HEK293T (cell line): ENCODE measurements at regions of chr1 and their contacts with region 1.

Region 1: DNA sequence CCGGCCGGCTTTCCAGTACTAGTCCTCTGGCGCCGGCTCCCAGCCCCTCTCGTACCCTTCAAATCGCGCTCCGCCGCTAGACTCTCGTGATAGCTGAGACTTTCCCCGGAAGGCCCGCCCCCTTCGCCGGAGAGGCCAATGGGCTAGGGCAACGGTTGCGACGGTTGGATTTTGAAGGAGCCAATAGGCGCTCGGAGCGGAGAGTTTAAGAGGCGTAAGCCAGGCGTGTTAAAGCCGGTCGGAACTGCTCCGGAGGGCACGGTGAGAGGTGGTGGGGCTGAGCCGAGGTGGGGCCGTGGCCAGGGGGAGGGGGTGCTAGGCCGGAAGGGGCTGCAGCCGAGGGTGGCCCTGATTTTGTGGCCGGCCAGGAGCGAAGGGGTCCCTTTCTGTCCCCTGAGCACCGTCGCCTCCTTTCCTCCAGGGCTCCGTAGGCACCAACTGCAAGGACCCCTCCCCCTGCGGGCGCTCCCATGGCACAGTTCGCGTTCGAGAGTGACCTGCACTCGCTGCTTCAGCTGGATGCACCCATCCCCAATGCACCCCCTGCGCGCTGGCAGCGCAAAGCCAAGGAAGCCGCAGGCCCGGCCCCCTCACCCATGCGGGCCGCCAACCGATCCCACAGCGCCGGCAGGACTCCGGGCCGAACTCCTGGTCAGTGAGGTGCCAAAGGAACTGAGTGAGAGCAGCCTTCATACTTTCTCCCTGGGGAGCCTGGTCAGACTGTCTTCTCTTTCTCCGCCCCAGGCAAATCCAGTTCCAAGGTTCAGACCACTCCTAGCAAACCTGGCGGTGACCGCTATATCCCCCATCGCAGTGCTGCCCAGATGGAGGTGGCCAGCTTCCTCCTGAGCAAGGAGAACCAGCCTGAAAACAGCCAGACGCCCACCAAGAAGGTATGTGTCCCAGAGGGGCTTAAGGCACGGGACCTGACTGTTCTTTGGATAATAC is at the start of gene CDC20:
- DNase-seq: peak; percentile 93

Region 2: GRCh38 chr1:43348809-43349583 is 10.0 kb before region 1 on chr1:
- CTCF ChIA-PET with region 1: interaction called, 3 read pairs
- POLR2A ChIA-PET with region 1: interaction called, 39 read pairs
- DNase-seq: peak; percentile 95

Region 3: DNA sequence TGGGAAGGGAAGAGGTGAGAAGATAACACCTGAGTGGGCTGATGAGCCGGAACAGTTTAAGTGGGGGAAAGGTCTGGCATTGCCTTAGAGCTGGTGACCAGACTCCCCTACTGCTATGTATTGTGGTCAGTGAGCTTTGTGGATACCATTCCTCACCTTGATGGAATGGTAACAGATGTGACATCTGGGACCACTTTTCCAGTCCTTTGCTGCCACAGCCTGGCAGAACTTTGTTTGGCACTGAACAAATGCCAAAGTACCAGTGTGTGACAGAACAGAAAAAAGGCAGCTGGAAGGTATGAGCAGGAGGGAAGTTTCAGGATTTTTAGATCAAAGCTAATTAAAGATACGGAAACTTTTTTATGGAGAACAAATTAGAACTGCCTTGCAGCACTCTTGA is 24.4 kb after region 1 on chr1:
- CTCF ChIA-PET with region 1: no interaction called
- POLR2A ChIA-PET with region 1: interaction called, 25 read pairs
- DNase-seq: no peak

Region 4: GRCh38 chr1:43389326-43390313 is 30.6 kb after region 1 on chr1 and contains the starts of genes MED8 and SZT2:
- CTCF ChIA-PET with region 1: no interaction called
- POLR2A ChIA-PET with region 1: interaction called, 25 read pairs
- DNase-seq: peak; percentile 94